AG04449 (cell line): ENCODE measurements at regions of chr19 and their contacts with region 1.

Region 1: DNA sequence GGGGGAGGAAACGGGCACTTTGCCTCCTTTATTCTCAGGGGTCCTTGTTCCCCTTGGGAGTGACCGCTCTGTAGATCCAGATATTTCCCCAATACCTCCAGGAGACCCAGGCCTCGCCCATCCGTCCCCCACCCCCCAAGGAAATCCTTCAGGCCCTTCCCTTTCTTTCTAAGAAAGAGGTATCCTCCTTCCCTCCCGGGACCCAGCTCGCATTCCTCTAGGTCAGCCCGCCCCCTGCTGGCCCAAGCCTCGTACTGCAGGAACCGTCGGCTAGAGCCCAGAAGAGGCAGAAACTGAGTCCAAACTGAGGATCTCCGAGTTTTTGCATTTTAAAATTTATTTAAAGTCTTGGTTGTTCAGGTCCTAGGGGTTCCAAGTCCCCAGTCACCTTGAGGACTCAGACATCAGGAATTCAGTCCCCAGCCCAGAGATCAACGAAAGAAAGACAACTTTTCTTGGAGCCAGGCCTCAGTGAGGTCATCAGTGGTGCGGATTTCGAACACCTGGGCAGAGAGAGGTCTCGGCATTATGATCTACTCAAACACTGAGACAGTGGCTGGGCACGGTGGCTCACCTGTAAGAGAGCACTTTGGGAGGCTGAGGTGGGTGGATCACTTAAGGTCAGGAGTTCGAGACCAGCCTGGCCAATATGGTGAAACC is 7.5 kb upstream of the LRFN1 start:
- DNase-seq: no peak
- H3K4me3 ChIP-seq: no peak overlapping the region
- CTCF ChIP-seq: peak; percentile 92

Region 2: GRCh38 chr19:39052243-39052746 is 275.9 kb before region 1 on chr19:
- CTCF ChIA-PET with region 1: interaction called, 18 read pairs
- POLR2A ChIA-PET with region 1: no interaction called
- DNase-seq: no peak
- H3K4me3 ChIP-seq: no peak overlapping the region
- CTCF ChIP-seq: peak; percentile 90

Region 3: GRCh38 chr19:39110263-39110967 is 217.8 kb before region 1 on chr19:
- CTCF ChIA-PET with region 1: interaction called, 94 read pairs
- POLR2A ChIA-PET with region 1: no interaction called
- DNase-seq: no peak
- H3K4me3 ChIP-seq: no peak overlapping the region
- CTCF ChIP-seq: peak; percentile 71

Region 4: DNA sequence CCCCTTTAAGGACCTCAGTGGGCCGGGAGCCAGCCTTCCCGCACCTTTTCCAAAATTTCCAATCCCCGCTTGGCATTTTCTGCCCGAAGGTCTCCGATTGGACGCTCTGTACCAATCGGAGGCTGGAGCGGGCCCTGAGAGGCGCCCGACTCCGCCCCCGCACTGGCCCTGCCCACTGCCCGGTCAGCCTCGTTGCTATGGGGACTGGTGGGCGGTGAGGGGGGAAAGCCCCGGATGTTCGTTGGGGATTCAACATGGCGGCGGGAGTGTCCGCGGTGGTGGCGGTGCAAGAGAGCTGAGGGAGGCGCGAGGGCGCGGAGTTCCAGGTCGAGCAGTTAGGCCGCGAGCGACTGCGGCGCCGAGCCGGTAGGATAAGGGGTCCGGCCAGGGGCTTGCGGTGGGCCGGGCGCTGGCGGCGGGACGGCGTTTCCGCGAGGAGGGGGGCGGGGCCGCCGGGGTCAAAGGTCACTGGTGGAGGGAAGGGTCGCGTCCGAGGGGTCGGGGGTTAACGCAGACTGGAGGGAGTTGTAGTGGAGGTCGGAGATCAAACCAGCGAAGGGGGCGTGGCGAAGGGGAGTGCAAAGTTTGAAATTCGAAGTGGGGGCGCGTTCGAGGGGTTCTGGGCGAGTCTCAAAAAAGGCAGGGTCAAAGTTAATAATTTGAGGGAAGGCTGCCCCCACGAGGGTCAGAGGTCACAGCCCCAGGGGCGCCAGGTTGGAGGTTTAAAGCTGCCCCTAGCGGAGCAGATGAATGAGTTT is 202.4 kb before region 1 on chr19 and contains the start of gene PAK4:
- CTCF ChIA-PET with region 1: interaction called, 111 read pairs
- POLR2A ChIA-PET with region 1: no interaction called
- DNase-seq: peak; percentile 70
- H3K4me3 ChIP-seq: peak within 1 kb of the TSS; percentile 90
- CTCF ChIP-seq: no peak

Region 5: GRCh38 chr19:39341719-39342604 is 13.8 kb after region 1 on chr19 and contains the start of gene SAMD4B:
- CTCF ChIA-PET with region 1: interaction called, 12 read pairs
- POLR2A ChIA-PET with region 1: interaction called, 3 read pairs
- DNase-seq: peak; percentile 72
- H3K4me3 ChIP-seq: peak within 1 kb of the TSS; percentile 90
- CTCF ChIP-seq: peak; percentile 88

Region 6: GRCh38 chr19:39412100-39412866 is 84.1 kb after region 1 on chr19 and contains the start of gene PLEKHG2:
- CTCF ChIA-PET with region 1: interaction called, 10 read pairs
- POLR2A ChIA-PET with region 1: no interaction called
- DNase-seq: peak; percentile 99
- H3K4me3 ChIP-seq: peak within 1 kb of the TSS; percentile 87
- CTCF ChIP-seq: peak; percentile 84

Region 7: GRCh38 chr19:39539519-39540332 is 211.6 kb after region 1 on chr19 and contains the start of gene EID2:
- CTCF ChIA-PET with region 1: no interaction called
- POLR2A ChIA-PET with region 1: no interaction called
- DNase-seq: peak; percentile 49
- H3K4me3 ChIP-seq: peak within 1 kb of the TSS; percentile 97
- CTCF ChIP-seq: peak; percentile 88